ENCODE measurements at regions of chr16 and their contacts with region 1.

Region 1: DNA sequence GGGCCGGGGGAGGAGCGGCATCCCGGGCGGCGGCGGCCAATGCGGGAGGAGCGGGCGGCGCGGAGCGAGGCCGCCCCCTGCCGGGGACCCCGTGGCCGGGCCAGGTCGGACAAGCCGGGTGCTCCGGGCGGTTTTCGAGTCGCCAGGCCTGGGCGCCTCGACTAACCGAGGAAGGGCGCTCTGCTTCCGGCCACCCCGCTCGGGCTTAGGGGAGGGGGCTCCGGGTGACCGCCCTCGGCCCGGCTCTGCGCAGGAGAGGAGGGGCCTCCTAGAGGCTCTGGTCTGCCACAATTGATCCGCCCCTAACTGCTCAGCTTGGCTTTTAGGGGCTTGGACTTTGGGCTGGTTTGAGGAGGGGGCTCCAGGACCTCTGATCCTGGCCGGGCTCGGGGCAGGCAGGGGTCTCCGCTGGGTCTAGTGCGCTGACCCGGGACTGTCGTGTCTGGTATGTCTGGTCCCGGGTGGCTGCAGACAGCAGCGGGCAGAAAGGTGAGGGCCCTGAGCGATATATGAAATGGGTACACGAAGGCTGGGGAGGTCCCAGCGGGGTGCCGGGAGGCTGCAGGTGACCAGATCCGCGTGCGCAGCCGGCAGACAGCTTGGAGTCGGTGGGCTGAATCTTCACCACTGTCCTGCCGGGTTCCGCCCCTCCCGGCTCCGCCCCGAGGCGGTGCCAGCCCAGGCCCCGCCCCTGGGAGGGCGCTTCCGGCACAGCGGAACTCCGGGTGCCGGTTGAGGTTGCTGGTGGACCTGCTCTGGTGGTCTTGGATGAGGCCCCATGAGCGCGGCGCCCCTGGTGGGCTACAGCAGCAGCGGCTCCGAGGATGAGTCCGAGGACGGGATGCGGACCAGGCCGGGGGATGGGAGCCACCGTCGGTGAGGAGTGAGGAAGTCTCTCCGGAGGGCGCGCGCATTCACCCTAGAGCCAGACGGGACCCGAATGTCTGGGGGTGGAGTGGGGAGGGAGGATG is at the start of gene USB1:
- DNase-seq: peak; percentile 93
- ATAC-seq: peak; percentile 83
- H3K4me3 ChIP-seq: peak within 1 kb of the TSS; percentile 48 to 95 (median 88)
- H3K4me3 Mint-ChIP-seq: peak within 1 kb of the TSS; percentile 97
- H3K27ac ChIP-seq: peak within 1 kb of the TSS; percentile 86 to 87
- H3K27ac Mint-ChIP-seq: peak within 1 kb of the TSS; percentile 96
- H3K4me1 ChIP-seq: peaks cover 16 to 26% of the 10 kb centered on the region in 2 donors
- H3K4me1 Mint-ChIP-seq: peaks cover 34% of the 10 kb centered on the region
- H3K27me3 ChIP-seq: no peaks in the 10 kb centered on the region
- H3K27me3 Mint-ChIP-seq: no peaks in the 10 kb centered on the region
- CTCF ChIP-seq: peak; percentile 71
- total RNA-seq, gene USB1: 32.8 and 34.4 TPM in 2 replicates

Region 2: DNA sequence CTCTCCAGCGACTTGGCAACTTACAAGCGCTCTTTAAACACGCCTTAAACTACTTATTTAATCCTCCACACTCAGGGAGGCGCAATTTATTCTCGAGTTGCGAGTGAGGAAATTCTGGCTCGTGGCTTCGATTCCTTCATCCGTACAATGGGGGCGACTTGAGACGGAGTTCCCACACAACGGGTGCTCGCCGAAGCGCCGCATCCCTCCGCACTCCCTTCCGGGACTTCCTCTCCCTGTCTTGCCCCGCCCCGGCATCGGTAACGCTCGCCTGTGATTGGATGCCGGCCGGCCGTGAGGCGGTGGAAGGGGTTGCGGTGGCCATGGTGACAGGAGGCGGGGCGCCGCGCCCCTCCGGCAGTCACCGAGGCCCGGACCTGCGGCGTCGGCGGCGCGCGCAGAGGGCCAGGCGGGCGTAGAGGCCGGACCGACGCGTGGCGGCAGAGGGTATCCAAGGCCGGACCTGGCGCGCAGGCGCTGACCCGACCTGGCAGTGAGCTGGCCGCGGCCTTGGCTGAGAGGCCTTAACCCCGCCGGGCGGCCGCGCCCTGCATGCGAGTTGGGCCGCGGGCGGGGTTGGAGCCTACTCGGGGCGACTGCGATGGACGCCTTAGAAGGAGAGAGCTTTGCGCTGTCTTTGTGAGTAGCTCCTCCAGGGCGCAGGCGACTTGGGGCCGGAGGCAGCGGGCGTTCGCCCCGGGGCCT is 756.1 kb before region 1 on chr16 and contains the start of gene ARL2BP:
- CTCF ChIA-PET with region 1: no interaction called
- POLR2A ChIA-PET with region 1: no interaction called
- intact Hi-C with region 1: loop called (anchors 10 kb)
- DNase-seq: peak; percentile 96
- ATAC-seq: peak; percentile 95
- H3K4me3 ChIP-seq: peak within 1 kb of the TSS; percentile 74 to 85 (median 79)
- H3K4me3 Mint-ChIP-seq: peak within 1 kb of the TSS; percentile 99
- H3K27ac ChIP-seq: peak within 1 kb of the TSS; percentile 79 to 92
- H3K27ac Mint-ChIP-seq: peak within 1 kb of the TSS; percentile 96
- H3K4me1 ChIP-seq: peaks cover 26 to 33% of the 10 kb centered on the region in 2 donors
- H3K4me1 Mint-ChIP-seq: peaks cover 34% of the 10 kb centered on the region
- H3K27me3 ChIP-seq: no peaks in the 10 kb centered on the region
- H3K27me3 Mint-ChIP-seq: no peaks in the 10 kb centered on the region
- CTCF ChIP-seq: no peak
- total RNA-seq, gene ARL2BP: 36.8 and 38.8 TPM in 2 replicates

Region 3: DNA sequence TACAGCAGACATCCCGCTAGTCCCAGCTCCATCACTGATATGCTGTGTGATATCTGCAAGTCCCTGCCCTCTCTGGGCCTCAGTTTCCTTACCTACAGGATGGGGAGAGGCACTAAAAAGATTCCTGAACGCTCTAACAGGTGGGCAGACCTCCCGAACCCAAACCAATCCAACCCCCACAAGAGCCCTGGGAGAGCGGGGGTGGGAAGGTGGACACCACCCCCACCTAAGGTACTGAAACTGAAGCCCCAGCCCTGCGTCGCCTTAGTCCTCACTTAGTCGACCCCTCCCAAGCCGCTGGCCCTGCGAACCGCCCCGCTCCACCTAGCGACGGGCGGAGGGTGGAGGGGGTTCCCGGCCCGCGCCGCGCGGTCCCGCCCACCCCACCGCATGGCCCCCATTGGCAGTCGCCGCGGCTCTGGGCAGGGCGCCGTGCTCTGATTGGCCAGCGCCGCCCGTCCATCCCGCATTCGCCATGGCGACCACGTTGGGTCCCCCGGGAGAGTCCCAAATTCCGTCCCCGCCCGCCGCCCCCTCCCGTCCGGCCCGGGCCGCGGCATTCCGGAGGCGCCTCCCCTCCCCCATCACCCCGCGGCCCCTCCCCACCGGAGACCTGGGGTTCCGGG is 465.2 kb before region 1 on chr16:
- CTCF ChIA-PET with region 1: no interaction called
- POLR2A ChIA-PET with region 1: no interaction called
- intact Hi-C with region 1: loop called (anchors 2 kb)
- DNase-seq: peak; percentile 95
- ATAC-seq: peak; percentile 76
- H3K4me3 ChIP-seq: peak overlapping the region in 4 of 5 experiments; percentile 56 to 73 (median 70)
- H3K4me3 Mint-ChIP-seq: peak overlapping the region; percentile 89
- H3K27ac ChIP-seq: peak overlapping the region; percentile 90 to 94
- H3K27ac Mint-ChIP-seq: peak overlapping the region; percentile 96
- H3K4me1 ChIP-seq: peaks cover 86 to 91% of the 10 kb centered on the region in 2 donors
- H3K4me1 Mint-ChIP-seq: peaks cover 79% of the 10 kb centered on the region
- H3K27me3 ChIP-seq: no peaks in the 10 kb centered on the region
- H3K27me3 Mint-ChIP-seq: no peaks in the 10 kb centered on the region
- CTCF ChIP-seq: peak; percentile 29

Region 4: DNA sequence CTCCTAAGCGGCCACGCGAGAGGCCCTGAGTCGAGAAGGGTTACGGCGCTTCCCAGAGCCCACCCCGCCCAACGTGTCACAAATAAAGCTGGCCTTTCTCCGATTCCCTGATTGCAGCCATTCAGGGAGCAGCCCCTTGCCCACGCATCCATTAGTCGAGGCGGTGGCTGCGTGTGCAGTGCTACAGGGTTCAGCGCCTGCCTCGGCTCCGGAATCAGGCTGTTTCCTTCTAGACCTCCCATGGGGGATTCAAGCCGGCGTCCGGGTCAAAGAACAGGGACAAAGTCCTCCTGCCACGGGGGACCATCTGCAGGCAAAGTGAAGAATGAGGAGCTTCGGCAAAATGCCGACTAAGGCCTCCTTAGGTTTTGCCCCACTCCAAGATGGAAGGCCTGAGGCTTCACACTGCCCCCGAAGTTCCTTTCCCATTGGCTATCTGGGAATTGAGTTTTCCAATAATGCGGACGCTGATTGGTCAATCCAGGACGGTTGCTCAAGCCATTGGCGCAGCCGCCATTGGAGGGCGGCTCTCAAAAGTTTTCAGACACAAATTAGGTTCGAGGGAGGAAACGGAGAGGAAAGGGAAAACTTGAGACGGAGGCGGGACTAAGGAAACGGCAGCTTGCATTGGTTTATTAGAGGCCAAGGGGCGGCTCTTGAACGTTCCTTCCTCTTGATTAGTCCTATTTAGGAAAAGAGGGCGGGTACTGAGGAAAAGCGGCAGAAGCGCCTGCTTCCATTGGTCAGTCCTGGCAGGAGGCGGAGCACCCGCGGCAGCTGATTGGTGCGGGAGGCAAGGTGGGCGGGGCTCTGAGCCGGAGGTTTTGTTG is 265.9 kb before region 1 on chr16:
- CTCF ChIA-PET with region 1: interaction called, 3 read pairs
- POLR2A ChIA-PET with region 1: no interaction called
- intact Hi-C with region 1: loop called (anchors 1 kb)
- DNase-seq: peak; percentile 99
- ATAC-seq: peak; percentile 88
- H3K4me3 ChIP-seq: peak overlapping the region; percentile 65 to 98 (median 90)
- H3K4me3 Mint-ChIP-seq: peak overlapping the region; percentile 93
- H3K27ac ChIP-seq: peak overlapping the region; percentile 37 to 78
- H3K27ac Mint-ChIP-seq: peak overlapping the region; percentile 89
- H3K4me1 ChIP-seq: peaks cover 15 to 19% of the 10 kb centered on the region in 2 donors
- H3K4me1 Mint-ChIP-seq: peaks cover 34% of the 10 kb centered on the region
- H3K27me3 ChIP-seq: no peaks in the 10 kb centered on the region
- H3K27me3 Mint-ChIP-seq: no peaks in the 10 kb centered on the region
- CTCF ChIP-seq: no peak

Region 5: DNA sequence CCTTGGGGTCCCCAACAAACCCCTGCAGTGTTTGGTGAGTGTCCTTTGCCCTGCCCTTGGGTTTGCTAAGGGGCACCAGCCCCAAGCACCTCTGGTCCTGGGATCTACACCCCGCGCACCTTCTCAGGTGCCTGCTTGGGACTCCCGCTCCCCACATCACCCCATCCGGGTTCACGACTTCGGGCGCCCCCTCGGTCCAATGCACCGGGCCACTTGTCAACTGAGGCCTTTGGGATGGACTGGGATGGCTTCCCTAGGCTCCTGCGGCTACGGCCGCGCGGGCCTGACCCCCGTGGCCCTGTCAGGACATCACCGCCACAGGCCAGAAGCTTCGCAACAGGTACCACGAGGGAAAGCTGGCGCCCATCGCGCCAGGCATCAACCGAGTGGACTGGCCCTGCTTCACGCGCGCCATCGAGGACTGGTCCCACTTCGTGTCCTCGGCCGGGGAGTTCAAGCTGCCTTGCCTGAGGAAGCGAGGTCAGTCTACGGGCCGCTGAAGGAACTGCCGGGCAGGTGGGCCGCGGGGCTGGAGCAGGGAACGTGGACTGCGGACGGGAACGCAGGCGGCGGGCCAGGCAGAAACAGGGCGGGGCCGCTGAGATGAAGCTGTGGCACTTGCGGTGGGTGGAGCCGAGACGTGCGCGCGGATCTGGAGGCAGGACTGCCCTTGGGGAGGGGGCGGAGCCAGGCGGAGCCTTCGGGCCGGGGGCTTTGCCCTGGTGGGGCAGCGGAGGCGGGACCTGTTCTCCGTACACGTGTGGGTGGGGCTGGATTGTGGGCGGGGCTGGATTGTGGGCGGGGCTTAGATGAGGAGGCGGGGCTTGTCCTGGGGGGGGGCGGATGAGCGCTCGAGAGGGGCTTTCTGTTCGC is 16.4 kb before region 1 on chr16:
- CTCF ChIA-PET with region 1: interaction called, 6 read pairs
- POLR2A ChIA-PET with region 1: no interaction called
- intact Hi-C with region 1: loop called (anchors 1 kb)
- DNase-seq: peak; percentile 90
- ATAC-seq: peak; percentile 99
- H3K4me3 ChIP-seq: peak overlapping the region; percentile 49 to 69 (median 63)
- H3K4me3 Mint-ChIP-seq: peak overlapping the region; percentile 93
- H3K27ac ChIP-seq: no peak overlapping the region
- H3K27ac Mint-ChIP-seq: peak overlapping the region; percentile 78
- H3K4me1 ChIP-seq: peaks cover 7 to 16% of the 10 kb centered on the region in 2 donors
- H3K4me1 Mint-ChIP-seq: peaks cover 18% of the 10 kb centered on the region
- H3K27me3 ChIP-seq: peaks cover 0 to 14% (median 6%) of the 10 kb centered on the region in 4 experiments
- H3K27me3 Mint-ChIP-seq: peaks cover 10% of the 10 kb centered on the region
- CTCF ChIP-seq: no peak

Region 6: DNA sequence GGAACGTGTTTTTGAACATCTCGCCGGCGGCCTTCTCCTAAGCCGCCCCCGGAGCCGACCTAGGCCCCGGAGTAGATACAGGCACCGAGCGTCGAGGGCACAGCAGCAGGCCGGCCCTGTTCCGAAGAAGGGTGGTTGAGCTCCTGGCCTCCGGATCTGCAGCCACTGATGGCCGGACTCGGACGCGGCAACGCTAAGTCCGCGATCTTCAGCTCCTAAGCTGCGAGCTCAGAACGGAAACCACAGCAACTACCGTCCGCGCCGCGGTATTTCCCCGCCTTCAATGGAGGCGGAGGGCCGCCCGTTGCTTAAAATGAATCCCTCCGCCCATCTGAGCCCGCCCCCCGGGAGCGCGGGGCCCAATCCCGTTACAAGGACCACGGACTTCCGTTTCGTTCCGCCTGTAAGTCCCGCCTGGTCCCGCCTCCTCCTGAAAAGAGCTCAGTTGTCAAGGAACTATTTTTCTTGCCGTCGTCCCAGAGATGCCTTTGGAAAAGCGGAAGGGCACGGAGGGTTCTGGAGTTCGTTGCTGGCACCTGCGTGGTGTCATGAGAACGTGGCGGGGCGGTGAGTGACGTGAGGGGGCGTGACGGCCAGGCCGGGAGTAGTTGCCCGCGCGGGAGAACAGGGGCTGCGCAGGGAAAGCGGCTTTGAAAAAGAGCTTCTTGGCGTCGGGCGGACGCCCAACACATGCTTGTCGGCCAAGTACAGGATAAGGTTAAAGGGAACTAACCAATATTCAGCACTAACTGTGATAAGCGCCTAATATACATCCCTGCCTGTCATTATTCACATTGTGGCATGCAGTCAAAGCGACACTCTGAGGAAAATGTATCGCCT is 128.3 kb after region 1 on chr16 and contains the start of gene CFAP20:
- CTCF ChIA-PET with region 1: interaction called, 3 read pairs
- POLR2A ChIA-PET with region 1: interaction called, 6 read pairs
- intact Hi-C with region 1: loop called (anchors 1 kb)
- DNase-seq: peak; percentile 99
- ATAC-seq: peak; percentile 93
- H3K4me3 ChIP-seq: peak within 1 kb of the TSS; percentile 66 to 98 (median 75)
- H3K4me3 Mint-ChIP-seq: peak within 1 kb of the TSS; percentile 89
- H3K27ac ChIP-seq: peak within 1 kb of the TSS; percentile 78 to 91
- H3K27ac Mint-ChIP-seq: peak within 1 kb of the TSS; percentile 93
- H3K4me1 ChIP-seq: peaks cover 30 to 36% of the 10 kb centered on the region in 2 donors
- H3K4me1 Mint-ChIP-seq: peaks cover 45% of the 10 kb centered on the region
- H3K27me3 ChIP-seq: no peaks in the 10 kb centered on the region
- H3K27me3 Mint-ChIP-seq: no peaks in the 10 kb centered on the region
- CTCF ChIP-seq: no peak
- total RNA-seq, gene CFAP20: 26.1 and 27.3 TPM in 2 replicates

Region 7: DNA sequence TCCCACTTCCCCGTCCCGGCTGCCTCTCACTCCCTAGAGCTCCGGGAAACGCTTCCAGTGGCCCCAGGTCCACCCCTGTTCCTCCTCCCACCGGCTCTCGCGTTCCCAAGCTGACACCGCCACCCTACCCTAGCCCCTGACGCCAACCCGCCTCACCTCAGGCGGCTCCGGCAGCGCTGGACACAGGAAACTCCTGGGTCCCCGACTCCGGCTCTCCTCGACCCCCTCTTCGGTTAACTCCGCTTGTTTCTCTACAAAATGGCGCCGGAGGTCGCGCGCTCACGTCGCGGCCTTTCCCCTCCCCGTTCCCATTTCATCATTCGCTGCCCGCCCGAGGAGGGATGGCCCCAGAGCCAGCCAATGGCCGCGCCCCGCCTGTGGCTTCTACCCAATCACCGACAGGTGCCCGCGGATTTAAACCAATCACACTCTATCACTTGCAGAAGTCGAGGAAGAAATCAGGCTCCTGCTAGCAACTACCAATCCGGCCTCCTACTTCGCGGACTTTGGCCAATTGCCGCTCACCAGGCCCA is 628.6 kb after region 1 on chr16 and contains the start of gene CNOT1:
- CTCF ChIA-PET with region 1: no interaction called
- POLR2A ChIA-PET with region 1: no interaction called
- intact Hi-C with region 1: loop called (anchors 2 kb)
- DNase-seq: no peak
- ATAC-seq: peak; percentile 80
- H3K4me3 ChIP-seq: peak within 1 kb of the TSS; percentile 54 to 100 (median 100)
- H3K4me3 Mint-ChIP-seq: peak within 1 kb of the TSS; percentile 93
- H3K27ac ChIP-seq: peak within 1 kb of the TSS; percentile 99 to 100
- H3K27ac Mint-ChIP-seq: peak within 1 kb of the TSS; percentile 97
- H3K4me1 ChIP-seq: peaks cover 19 to 26% of the 10 kb centered on the region in 2 donors
- H3K4me1 Mint-ChIP-seq: peaks cover 40% of the 10 kb centered on the region
- H3K27me3 ChIP-seq: no peaks in the 10 kb centered on the region
- H3K27me3 Mint-ChIP-seq: no peaks in the 10 kb centered on the region
- CTCF ChIP-seq: no peak
- total RNA-seq, gene CNOT1: 246 and 268 TPM in 2 replicates

Measured in B cell (primary cell).